Heart right ventricle (tissue), 16 donors: ENCODE measurements at regions of chr12 and their contacts with region 1.

Region 1: GRCh38 chr12:712172-712863 is 40.1 kb upstream of the WNK1 start:
- DNase-seq: no peak
- ATAC-seq: peak in 1 of 8 donors; percentile 7
- H3K4me3 ChIP-seq: no peak overlapping the region
- H3K27ac ChIP-seq: peak overlapping the region in 8 of 10 donors; percentile 40 to 92 (median 70)
- H3K4me1 ChIP-seq: peaks cover 0 to 26% (median 6%) of the 10 kb centered on the region in 9 donors
- H3K27me3 ChIP-seq: no peaks in the 10 kb centered on the region
- CTCF ChIP-seq: no peak

Region 2: DNA sequence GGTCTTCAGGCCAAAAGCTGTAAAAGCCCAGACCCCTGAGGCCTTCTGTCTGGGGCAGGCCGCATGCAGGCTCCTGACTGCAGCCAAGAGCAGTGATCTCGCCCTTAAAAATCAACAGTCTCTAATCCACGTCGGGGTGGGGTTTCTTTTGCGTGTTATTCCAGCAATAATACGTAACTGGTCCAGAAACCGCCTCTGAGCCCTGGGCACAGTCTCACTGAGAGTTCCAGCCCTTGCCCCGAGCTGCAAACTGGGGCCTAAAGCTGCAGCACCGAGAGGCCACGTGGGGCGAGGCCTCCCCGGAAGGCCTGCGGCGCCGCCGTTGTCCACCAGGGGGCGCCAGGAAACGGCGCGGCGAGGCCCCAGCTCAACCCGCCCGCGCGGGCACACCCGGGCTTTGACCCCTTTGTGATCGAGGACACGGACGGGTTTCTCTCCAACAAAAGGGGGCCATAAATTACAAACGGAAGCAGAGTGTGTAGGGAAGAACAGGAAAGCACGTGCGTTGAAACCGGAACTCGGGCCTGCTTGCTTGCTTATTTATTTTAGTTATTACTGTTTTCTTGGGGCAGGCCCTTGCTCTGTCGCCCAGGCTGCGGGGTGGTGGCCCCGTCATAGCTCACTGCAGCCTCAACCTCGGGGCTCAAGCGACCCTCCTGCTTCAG is 136.2 kb before region 1 on chr12:
- intact Hi-C with region 1: loop called in 1 of 10 experiments (anchors 10 kb)
- DNase-seq: peak; percentile 68 to 87
- ATAC-seq: peak; percentile 35 to 77 (median 60)
- H3K4me3 ChIP-seq: peak overlapping the region in 5 of 10 donors; percentile 7 to 24 (median 19)
- H3K27ac ChIP-seq: peak overlapping the region; percentile 47 to 87 (median 76)
- H3K4me1 ChIP-seq: peaks cover 34 to 66% (median 56%) of the 10 kb centered on the region in 9 donors
- H3K27me3 ChIP-seq: no peaks in the 10 kb centered on the region
- CTCF ChIP-seq: peak; percentile 99 to 100 (median 100)

Region 3: DNA sequence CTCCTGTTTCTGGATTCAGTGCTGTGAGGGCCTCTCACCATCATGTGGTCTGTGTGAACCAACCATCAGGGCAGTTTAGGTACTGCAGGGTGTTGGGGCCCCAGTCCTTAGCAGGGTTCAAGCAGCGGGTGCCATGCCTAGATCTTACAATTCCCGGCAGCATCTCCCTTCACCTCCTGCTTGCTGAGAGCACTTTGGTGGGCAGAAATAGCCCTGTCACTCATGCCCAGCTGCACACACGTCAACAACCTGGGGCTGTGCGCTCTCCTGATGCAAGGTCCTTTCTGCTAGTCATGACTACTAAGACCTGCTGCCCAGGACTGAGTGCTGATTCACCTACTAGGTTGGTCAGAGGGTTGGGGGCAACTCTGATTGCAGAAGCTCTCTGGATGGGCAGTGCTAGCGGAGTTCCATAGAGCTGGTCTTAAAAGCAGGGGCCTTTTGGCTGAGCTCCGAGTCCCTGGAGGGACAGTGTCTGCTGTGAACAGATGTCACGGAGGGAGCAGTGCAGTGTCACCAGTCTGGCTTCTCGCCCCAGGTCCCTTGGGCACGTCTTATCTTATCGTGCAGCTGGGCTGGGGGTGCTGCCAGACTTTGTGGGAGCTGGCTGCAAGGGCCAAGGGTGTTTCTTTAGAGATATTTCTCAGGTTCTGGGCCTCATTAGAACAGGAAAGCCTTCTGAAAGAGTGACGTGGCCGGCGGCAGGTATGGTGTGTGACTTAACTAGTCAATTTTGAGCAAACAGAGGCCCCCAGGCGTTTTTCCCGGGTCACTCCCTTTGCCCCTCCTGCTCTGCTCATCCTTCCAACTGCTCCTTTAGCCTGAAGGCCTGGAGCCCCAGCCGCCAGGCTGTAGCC is 120.9 kb before region 1 on chr12:
- intact Hi-C with region 1: loop called in 1 of 10 experiments (anchors 5 kb)
- DNase-seq: peak; percentile 88 to 89
- ATAC-seq: peak; percentile 84 to 95 (median 91)
- H3K4me3 ChIP-seq: peak overlapping the region in 1 of 10 donors; percentile 20
- H3K27ac ChIP-seq: peak overlapping the region; percentile 70 to 92 (median 84)
- H3K4me1 ChIP-seq: peaks cover 13 to 41% (median 25%) of the 10 kb centered on the region in 9 donors
- H3K27me3 ChIP-seq: no peaks in the 10 kb centered on the region
- CTCF ChIP-seq: peak in 8 of 9 donors; percentile 11 to 57 (median 20)